Activated CD4-positive, alpha-beta T cell treated with anti-CD3 and anti-CD28 coated beads for 36 hours (primary cell): ENCODE measurements at regions of chr13 and their contacts with region 1.

Region 1: DNA sequence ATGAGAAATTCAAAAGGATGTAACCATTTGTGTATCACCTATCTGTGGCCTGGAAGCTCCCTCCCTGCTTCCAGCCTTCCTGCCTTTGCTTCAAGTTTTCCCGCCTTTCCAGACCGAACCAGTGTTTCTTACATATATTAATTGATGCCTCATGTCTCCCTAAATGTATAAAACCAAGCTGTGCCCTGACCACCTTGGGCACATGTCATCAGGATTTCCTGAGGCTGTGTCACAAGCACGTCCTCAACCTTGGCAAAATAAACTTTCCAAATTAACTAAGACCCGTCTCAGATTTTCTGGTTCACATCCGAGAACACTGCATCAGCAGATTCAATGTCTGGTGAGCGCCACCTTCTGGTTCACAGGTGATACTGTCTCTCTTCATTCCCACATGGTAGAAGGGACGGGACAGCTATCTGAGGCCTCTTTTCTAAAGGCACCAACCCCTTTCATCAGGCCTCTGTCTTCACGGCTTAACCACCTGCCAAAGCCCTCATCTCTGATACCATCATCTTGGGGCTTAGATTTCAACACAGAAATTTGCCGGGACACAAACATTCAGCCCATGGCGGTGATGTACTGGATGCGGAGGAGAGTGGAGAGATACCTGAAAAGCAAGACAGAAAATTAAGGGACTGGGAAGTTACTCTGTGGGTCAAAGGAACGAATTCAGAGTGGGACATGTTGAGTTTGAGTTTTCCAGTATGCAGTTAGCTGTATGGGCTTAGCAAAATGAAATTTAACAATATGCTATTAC is 58.7 kb upstream of the PABPC3 start:
- DNase-seq: peak; percentile 69
- ATAC-seq: peak; percentile 60
- H3K4me3 Mint-ChIP-seq: no peak overlapping the region
- H3K27ac Mint-ChIP-seq: no peak overlapping the region
- H3K4me1 Mint-ChIP-seq: peaks cover 2% of the 10 kb centered on the region
- H3K27me3 Mint-ChIP-seq: peaks cover 33% of the 10 kb centered on the region

Region 2: DNA sequence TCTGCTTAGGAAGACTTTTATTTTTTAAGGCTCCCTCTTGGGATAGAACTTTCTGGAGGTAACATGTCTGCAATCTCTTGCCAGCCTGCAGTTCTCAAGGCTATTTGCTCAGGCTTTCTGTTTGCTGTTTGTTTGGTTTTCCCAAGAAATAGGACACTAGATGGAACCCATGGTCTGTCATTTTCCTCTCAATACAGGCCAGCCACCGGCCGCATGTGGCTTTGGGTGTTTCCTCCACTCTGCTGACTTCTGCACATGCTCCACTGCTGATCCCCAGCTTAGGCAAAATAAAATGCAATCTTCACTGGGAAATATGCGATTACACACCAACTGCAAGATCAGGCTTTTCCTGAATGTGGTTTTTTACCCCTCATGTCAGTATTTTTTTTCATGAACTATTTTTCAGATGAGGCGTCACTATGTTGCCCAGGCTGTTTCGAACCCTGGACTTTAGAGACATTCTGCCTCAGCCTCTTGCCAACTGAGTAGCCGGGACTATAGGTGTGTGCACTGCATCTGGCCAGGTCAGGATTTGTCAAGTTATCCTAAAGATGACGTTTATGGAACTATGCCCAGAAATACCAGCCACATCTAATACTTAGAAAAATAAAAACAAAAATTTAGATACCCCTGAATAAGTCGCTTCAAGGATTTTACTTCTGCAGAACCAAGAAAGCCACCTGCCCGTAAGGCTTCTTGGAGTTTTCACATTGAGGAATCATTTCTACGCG is 35.6 kb before region 1 on chr13:
- CTCF ChIA-PET with region 1: interaction called, 9 read pairs
- POLR2A ChIA-PET with region 1: no interaction called
- intact Hi-C with region 1: loop called (anchors 1 kb)
- DNase-seq: no peak
- ATAC-seq: no peak
- H3K4me3 Mint-ChIP-seq: no peak overlapping the region
- H3K27ac Mint-ChIP-seq: no peak overlapping the region
- H3K4me1 Mint-ChIP-seq: peaks cover 3% of the 10 kb centered on the region
- H3K27me3 Mint-ChIP-seq: peaks cover 25% of the 10 kb centered on the region